Endothelial cell of umbilical vein (primary cell): ENCODE measurements at regions of chr3 and their contacts with region 1.

Region 1: DNA sequence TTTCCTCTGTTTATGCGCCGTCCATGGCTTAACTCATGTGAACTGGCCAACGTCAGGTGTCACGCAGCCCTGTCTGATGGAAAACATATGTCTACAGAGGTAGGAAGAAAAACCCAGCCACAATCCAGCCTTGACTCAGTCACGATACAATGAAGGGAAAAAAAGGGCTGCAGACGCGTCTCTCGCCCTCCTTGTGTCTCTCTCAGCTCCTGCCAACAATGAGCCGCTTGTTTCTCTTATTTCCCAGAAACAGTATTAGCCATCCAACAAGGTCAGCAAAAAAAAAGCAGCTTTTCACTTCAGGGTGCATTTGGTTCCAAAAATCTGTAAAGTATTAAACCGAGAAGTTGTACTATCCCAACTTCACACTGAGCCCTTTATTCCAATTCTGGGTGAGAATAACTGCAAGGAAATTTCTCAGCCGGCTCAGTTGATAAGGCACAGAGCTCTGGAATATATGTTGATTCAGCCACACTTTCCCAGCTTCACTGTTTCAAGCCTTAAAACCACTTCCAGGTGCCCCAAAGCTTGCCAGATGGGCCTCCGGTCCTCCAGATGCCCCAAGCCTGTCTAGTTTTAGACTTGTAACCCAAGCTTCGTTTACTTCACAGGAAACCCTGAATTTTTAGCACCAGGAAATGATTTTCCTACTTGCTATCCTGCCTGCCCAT is 79.4 kb downstream of the TM4SF4 start:
- DNase-seq: peak; percentile 85
- H3K4me3 ChIP-seq: peak overlapping the region in 1 of 3 experiments; percentile 13
- H3K27ac ChIP-seq: peak overlapping the region; percentile 88
- H3K4me1 ChIP-seq: peaks cover 46% of the 10 kb centered on the region
- H3K27me3 ChIP-seq: no peaks in the 10 kb centered on the region
- CTCF ChIP-seq: no peak
- POLR2A ChIP-seq: no peak

Region 2: GRCh38 chr3:149152420-149152819 is 401.5 kb before region 1 on chr3:
- CTCF ChIA-PET with region 1: no interaction called
- POLR2A ChIA-PET with region 1: no interaction called
- dilution Hi-C with region 1: no loop called
- intact Hi-C with region 1: no loop called
- DNase-seq: no peak
- H3K4me3 ChIP-seq: no peak overlapping the region
- H3K27ac ChIP-seq: no peak overlapping the region
- H3K4me1 ChIP-seq: peaks cover 11% of the 10 kb centered on the region
- H3K27me3 ChIP-seq: no peaks in the 10 kb centered on the region
- CTCF ChIP-seq: no peak
- POLR2A ChIP-seq: no peak

Region 3: GRCh38 chr3:149512209-149512782 is 41.6 kb before region 1 on chr3:
- CTCF ChIA-PET with region 1: no interaction called
- POLR2A ChIA-PET with region 1: no interaction called
- dilution Hi-C with region 1: no loop called
- intact Hi-C with region 1: loop called (anchors 2 kb)
- DNase-seq: peak; percentile 77
- H3K4me3 ChIP-seq: no peak overlapping the region
- H3K27ac ChIP-seq: no peak overlapping the region
- H3K4me1 ChIP-seq: peaks cover 18% of the 10 kb centered on the region
- H3K27me3 ChIP-seq: no peaks in the 10 kb centered on the region
- CTCF ChIP-seq: peak; percentile 66 to 71
- POLR2A ChIP-seq: no peak

Region 4: GRCh38 chr3:149536429-149536828 is 17.5 kb before region 1 on chr3:
- CTCF ChIA-PET with region 1: interaction called, 20 read pairs
- POLR2A ChIA-PET with region 1: interaction called, 3 read pairs
- dilution Hi-C with region 1: no loop called
- intact Hi-C with region 1: no loop called
- DNase-seq: no peak
- H3K4me3 ChIP-seq: no peak overlapping the region
- H3K27ac ChIP-seq: peak overlapping the region; percentile 20
- H3K4me1 ChIP-seq: peaks cover 79% of the 10 kb centered on the region
- H3K27me3 ChIP-seq: no peaks in the 10 kb centered on the region
- CTCF ChIP-seq: no peak
- POLR2A ChIP-seq: no peak

Region 5: DNA sequence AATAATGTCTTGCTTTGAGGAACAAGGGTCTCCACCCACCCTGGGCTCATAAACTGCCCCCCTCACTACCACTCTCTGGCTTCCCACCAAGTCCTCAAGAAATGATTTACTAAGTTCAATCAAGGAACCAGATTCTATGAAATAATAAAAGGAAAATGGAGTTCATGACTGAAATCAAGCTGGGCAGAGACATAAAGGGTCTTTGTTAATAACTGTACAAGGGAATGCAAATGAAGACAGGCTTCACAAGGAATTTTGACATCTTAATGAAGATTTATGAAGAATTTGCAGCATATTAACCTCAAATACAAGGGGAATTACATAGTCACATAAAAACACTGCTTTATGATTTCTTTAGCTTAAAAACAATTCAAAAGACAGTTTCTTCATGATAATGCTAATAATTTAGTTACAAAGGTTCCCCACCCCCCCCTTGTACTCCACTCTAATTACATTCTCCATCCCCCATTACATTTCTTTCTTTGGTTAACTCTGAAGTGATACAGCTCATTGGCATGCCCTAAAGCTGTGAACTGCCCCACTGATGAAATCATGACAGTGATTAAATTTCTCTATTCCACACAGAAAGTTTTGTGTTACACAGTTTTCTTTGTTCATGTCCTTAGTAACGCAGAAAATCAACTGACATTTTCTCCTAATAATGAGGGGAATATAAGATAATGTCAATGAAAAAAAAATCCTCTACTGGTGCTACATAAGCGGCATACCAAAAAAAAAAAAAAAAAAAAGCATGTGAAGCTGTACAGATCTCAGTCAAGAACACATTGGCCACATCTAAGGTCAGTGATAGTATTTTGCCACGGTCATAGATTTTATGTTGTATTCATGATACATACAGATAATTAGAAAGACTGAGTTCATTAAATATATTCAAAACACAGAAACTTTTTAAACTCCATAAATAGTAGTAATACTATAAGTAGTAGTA is 49.5 kb after region 1 on chr3:
- CTCF ChIA-PET with region 1: interaction called, 3 read pairs
- POLR2A ChIA-PET with region 1: interaction called, 3 read pairs
- dilution Hi-C with region 1: no loop called
- intact Hi-C with region 1: loop called (anchors 2 kb)
- DNase-seq: no peak
- H3K4me3 ChIP-seq: no peak overlapping the region
- H3K27ac ChIP-seq: peak overlapping the region; percentile 83
- H3K4me1 ChIP-seq: peaks cover 93% of the 10 kb centered on the region
- H3K27me3 ChIP-seq: no peaks in the 10 kb centered on the region
- CTCF ChIP-seq: no peak
- POLR2A ChIP-seq: no peak